ENCODE measurements at regions of chr12 and their contacts with region 1.

Region 1: DNA sequence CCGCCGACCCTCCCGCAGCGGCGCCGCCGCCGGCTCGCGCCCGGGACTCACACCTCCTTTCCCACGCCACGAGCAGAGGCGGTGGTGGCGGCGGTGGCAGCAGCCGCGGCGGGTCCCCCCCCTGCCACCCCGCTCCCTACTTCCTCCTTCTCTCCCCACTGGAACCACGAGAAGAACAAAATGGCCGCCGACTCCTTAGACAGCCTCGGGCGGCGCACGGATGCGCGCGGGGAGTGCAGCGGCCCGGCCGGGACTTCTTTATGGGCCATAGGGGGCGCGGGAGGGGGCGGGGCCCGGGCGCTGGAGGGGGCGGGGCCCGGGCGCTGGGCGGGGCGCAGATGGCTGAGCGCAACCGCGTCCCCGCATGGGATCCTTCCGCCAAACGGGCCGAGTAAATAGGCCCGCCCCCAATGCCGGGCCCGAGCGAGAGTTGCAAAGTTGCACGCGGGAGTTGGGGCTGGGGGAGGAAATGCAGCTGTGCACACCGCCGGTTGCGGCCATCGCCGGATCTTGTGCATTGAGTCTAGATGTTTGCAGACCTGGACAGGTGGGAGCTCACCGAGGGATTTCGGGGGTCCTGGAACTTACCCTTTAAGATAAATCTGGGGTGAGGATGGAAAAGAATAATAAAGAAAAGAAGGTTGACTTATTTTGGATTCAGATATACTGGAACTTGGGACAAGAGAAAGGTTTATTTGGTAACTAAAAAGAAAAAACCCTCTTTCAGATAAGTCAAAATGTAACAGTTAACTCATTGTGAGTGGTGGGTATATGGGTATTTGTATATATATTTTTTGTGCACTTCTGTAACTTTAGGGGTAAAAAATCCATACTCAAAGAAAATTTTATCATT is at the start of gene PPP1CC:
- DNase-seq: peak; percentile 94
- H3K4me3 Mint-ChIP-seq: peak within 1 kb of the TSS; percentile 99
- H3K27ac Mint-ChIP-seq: peak within 1 kb of the TSS; percentile 99
- H3K4me1 Mint-ChIP-seq: peaks cover 34% of the 10 kb centered on the region
- H3K27me3 Mint-ChIP-seq: no peaks in the 10 kb centered on the region
- total RNA-seq, gene PPP1CC: 334 to 343 TPM

Region 2: GRCh38 chr12:110619534-110619953 is 123.4 kb before region 1 on chr12:
- CTCF ChIA-PET with region 1: interaction called, 3 read pairs
- POLR2A ChIA-PET with region 1: interaction called, 3 read pairs
- intact Hi-C with region 1: loop called (anchors 1 kb)
- DNase-seq: peak; percentile 69
- H3K4me3 Mint-ChIP-seq: no peak overlapping the region
- H3K27ac Mint-ChIP-seq: peak overlapping the region; percentile 71
- H3K4me1 Mint-ChIP-seq: peaks cover 15% of the 10 kb centered on the region
- H3K27me3 Mint-ChIP-seq: no peaks in the 10 kb centered on the region

Region 3: DNA sequence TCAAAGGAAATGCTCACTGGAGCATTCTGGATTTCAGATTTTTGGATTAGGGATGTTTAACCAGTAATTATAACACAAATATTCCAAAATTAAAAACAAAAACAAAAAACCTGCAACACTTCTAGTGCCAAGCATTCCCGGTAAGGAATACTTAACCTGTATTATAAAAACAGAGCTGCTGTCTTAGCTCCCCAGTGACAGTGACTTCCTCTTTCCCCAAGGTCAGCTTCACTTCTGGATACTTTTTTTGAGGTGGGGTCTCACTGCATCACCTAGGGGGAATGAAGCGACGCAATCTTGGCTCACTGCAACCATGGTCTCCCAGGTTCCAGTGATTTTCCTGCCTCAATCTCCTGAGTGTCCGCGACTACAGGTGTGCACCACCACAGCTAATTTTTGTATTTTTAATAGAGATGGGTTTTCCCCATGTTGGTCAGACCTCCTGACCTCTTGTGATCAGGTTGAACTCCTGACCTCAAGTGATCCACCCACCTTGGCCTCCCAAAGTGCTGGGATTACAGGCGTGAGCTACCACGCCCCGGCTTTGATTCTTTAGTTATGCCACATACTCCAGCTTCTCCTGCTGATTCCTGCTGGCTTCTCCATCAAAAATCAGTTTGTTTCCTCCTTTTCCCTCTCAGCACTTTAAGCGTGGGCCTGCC is 16.1 kb before region 1 on chr12:
- CTCF ChIA-PET with region 1: interaction called, 12 read pairs
- POLR2A ChIA-PET with region 1: interaction called, 19 read pairs
- intact Hi-C with region 1: loop called (anchors 1 kb)
- DNase-seq: no peak
- H3K4me3 Mint-ChIP-seq: no peak overlapping the region
- H3K27ac Mint-ChIP-seq: peak overlapping the region; percentile 84
- H3K4me1 Mint-ChIP-seq: peaks cover 58% of the 10 kb centered on the region
- H3K27me3 Mint-ChIP-seq: no peaks in the 10 kb centered on the region

Region 4: GRCh38 chr12:112170376-112170775 is 1427.4 kb after region 1 on chr12:
- CTCF ChIA-PET with region 1: no interaction called
- POLR2A ChIA-PET with region 1: no interaction called
- intact Hi-C with region 1: no loop called
- DNase-seq: peak; percentile 42
- H3K4me3 Mint-ChIP-seq: no peak overlapping the region
- H3K27ac Mint-ChIP-seq: no peak overlapping the region
- H3K4me1 Mint-ChIP-seq: no peaks in the 10 kb centered on the region
- H3K27me3 Mint-ChIP-seq: no peaks in the 10 kb centered on the region